Activated CD4-positive, alpha-beta T cell treated with anti-CD3 and anti-CD28 coated beads for 36 hours (primary cell): ENCODE measurements at regions of chr10 and their contacts with region 1.

Region 1: GRCh38 chr10:17643755-17644484 is at the start of gene STAM:
- DNase-seq: peak; percentile 96
- ATAC-seq: peak; percentile 80
- H3K4me3 Mint-ChIP-seq: peak within 1 kb of the TSS; percentile 92
- H3K27ac Mint-ChIP-seq: peak within 1 kb of the TSS; percentile 99
- H3K4me1 Mint-ChIP-seq: peaks cover 49% of the 10 kb centered on the region
- H3K27me3 Mint-ChIP-seq: no peaks in the 10 kb centered on the region
- total RNA-seq, gene STAM: 17.9 to 23.8 TPM

Region 2: GRCh38 chr10:15859906-15860691 is 1783.8 kb before region 1 on chr10 and contains the start of gene MINDY3:
- CTCF ChIA-PET with region 1: no interaction called
- POLR2A ChIA-PET with region 1: no interaction called
- intact Hi-C with region 1: loop called in 1 of 2 experiments (anchors 2 kb)
- DNase-seq: peak; percentile 88
- ATAC-seq: peak; percentile 94
- H3K4me3 Mint-ChIP-seq: peak within 1 kb of the TSS; percentile 88
- H3K27ac Mint-ChIP-seq: peak within 1 kb of the TSS; percentile 93
- H3K4me1 Mint-ChIP-seq: peaks cover 32% of the 10 kb centered on the region
- H3K27me3 Mint-ChIP-seq: peaks cover 10% of the 10 kb centered on the region
- total RNA-seq, gene MINDY3: 11.5 to 12.8 TPM

Region 3: GRCh38 chr10:17023386-17024298 is 620.3 kb before region 1 on chr10:
- CTCF ChIA-PET with region 1: no interaction called
- POLR2A ChIA-PET with region 1: no interaction called
- intact Hi-C with region 1: loop called (anchors 5 to 10 kb)
- DNase-seq: peak; percentile 89
- ATAC-seq: peak; percentile 66
- H3K4me3 Mint-ChIP-seq: peak overlapping the region; percentile 50
- H3K27ac Mint-ChIP-seq: peak overlapping the region; percentile 95
- H3K4me1 Mint-ChIP-seq: peaks cover 62% of the 10 kb centered on the region
- H3K27me3 Mint-ChIP-seq: no peaks in the 10 kb centered on the region

Region 4: GRCh38 chr10:17228091-17228940 is 415.6 kb before region 1 on chr10 and contains the start of gene VIM:
- CTCF ChIA-PET with region 1: interaction called, 4 read pairs
- POLR2A ChIA-PET with region 1: interaction called, 5 read pairs
- intact Hi-C with region 1: loop called in 1 of 2 experiments (anchors 2 kb)
- DNase-seq: peak; percentile 93
- ATAC-seq: peak; percentile 47
- H3K4me3 Mint-ChIP-seq: peak within 1 kb of the TSS; percentile 82
- H3K27ac Mint-ChIP-seq: peak within 1 kb of the TSS; percentile 90
- H3K4me1 Mint-ChIP-seq: peaks cover 41% of the 10 kb centered on the region
- H3K27me3 Mint-ChIP-seq: peaks cover 1% of the 10 kb centered on the region
- total RNA-seq, gene VIM: 334 to 396 TPM

Region 5: GRCh38 chr10:17438583-17438982 is 205.3 kb before region 1 on chr10:
- CTCF ChIA-PET with region 1: no interaction called
- POLR2A ChIA-PET with region 1: no interaction called
- intact Hi-C with region 1: no loop called
- DNase-seq: no peak
- ATAC-seq: no peak
- H3K4me3 Mint-ChIP-seq: no peak overlapping the region
- H3K27ac Mint-ChIP-seq: no peak overlapping the region
- H3K4me1 Mint-ChIP-seq: peaks cover 1% of the 10 kb centered on the region
- H3K27me3 Mint-ChIP-seq: peaks cover 6% of the 10 kb centered on the region

Region 6: GRCh38 chr10:17669185-17669872 is 25.4 kb after region 1 on chr10:
- CTCF ChIA-PET with region 1: interaction called, 8 read pairs
- POLR2A ChIA-PET with region 1: interaction called, 5 read pairs
- intact Hi-C with region 1: loop called (anchors 1 kb)
- DNase-seq: peak; percentile 69
- ATAC-seq: peak; percentile 66
- H3K4me3 Mint-ChIP-seq: peak overlapping the region; percentile 67
- H3K27ac Mint-ChIP-seq: peak overlapping the region; percentile 88
- H3K4me1 Mint-ChIP-seq: peaks cover 57% of the 10 kb centered on the region
- H3K27me3 Mint-ChIP-seq: no peaks in the 10 kb centered on the region

Region 7: DNA sequence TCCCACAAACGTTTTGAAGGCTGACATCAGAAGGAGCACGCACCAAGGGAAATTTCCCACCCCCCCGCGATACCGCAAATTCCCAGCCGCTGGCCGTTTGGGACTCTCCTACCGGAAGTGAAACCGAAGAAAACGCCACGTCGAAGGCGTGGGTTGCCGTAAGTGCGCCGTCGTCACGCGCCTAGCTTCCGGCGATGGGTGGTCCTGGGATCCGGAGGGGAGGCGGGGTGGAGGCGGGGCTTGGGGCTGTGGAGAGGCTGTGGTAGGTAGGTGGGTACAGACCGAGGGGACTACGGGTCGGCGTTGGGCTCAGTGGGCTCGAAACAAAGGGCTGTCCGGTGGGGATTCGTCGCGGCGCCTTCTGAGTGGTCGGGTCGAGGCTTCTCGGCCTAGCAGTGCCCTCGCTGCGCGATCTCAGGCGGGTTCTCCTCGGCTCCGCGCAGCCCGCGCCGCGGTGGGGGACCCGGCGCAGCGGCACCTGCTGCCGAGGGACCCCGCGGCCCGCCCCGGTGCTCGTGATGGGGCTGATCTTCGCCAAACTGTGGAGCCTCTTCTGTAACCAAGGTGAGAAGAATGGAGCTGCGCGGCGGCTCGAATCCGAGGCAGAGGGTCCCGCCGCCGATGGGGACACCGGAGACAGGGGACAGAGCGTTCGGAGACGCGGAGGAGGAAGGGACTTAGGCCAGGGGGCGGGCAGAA is 1015.3 kb after region 1 on chr10 and contains the start of gene ARL5B:
- CTCF ChIA-PET with region 1: no interaction called
- POLR2A ChIA-PET with region 1: no interaction called
- intact Hi-C with region 1: loop called (anchors 5 kb)
- DNase-seq: peak; percentile 98
- ATAC-seq: peak; percentile 95
- H3K4me3 Mint-ChIP-seq: peak within 1 kb of the TSS; percentile 99
- H3K27ac Mint-ChIP-seq: peak within 1 kb of the TSS; percentile 98
- H3K4me1 Mint-ChIP-seq: peaks cover 39% of the 10 kb centered on the region
- H3K27me3 Mint-ChIP-seq: no peaks in the 10 kb centered on the region
- total RNA-seq, gene ARL5B: 11.3 to 12.0 TPM